ENCODE measurements at regions of chr21 and their contacts with region 1.

Region 1: GRCh38 chr21:42818328-42818749 is 61.0 kb downstream of the WDR4 start:
- DNase-seq: peak; percentile 77
- H3K4me3 Mint-ChIP-seq: no peak overlapping the region
- H3K27ac Mint-ChIP-seq: no peak overlapping the region
- H3K4me1 Mint-ChIP-seq: no peaks in the 10 kb centered on the region
- H3K27me3 Mint-ChIP-seq: no peaks in the 10 kb centered on the region

Region 2: DNA sequence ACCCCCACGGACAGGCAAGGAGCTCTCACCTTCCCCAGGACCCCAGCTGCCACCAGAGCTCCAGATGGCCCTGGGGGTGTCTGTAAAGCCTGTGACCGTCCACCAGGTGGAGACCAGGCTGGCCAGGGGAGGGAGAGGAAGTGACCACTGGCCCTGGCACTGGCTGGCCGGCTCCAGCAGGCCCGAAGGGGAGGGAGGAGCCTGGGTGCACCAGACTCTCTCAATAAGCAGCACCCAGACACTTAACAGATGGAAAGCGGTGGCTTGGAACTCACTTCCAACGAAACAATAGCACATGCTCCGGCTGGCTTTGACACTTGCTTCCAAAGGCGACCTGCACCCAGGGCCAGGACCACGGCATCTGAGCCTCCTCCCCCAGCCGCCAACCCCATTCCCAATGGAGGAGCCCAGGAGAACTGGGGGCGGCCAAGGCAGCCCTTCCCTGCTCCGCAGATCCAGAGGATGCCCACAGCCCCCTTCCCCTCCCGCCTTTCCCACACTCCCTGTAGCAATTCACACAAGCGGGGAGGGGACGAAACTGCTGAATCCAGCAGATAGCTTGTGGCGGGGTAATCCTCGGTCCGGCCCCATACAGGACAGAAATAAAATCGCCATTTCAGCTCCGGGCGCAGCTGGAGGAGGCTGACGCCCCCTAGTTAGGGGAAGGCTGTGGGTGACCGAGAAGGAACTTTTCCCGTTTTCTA is 165.7 kb before region 1 on chr21:
- CTCF ChIA-PET with region 1: no interaction called
- intact Hi-C with region 1: loop called (anchors 1 kb)
- DNase-seq: no peak
- H3K4me3 Mint-ChIP-seq: peak overlapping the region; percentile 70
- H3K27ac Mint-ChIP-seq: no peak overlapping the region
- H3K4me1 Mint-ChIP-seq: peaks cover 20% of the 10 kb centered on the region
- H3K27me3 Mint-ChIP-seq: no peaks in the 10 kb centered on the region

Region 3: DNA sequence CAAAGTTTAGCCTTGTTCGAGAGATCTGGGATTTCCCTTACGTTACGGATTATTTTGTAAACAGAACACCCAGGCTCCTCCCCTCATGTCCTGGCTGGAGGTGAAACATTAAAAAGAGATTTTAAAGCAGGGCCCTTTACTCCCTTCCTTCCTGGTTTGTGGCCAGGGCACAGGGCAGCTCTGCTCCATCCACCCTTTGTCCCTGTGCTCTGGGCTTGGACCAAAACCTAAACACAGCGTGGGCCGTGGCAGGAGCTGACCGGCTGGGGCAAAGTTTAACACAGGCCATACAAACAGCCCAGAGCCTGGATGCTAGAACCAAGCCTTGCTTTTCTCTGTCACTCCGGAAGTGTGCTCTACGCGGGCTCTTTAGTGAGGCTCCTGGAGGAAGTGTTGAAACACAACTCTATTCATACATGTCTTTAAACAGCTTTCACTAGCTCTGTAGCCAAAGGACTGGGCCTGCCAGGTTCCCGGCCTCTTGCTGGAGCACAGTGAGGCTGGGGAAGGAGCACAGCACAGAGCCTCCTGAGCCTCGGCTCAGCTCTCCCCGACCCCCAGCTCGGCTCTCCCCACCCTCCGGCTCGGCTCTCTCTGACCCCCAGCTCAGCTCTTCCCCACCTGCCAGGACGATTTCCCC is 80.3 kb before region 1 on chr21:
- CTCF ChIA-PET with region 1: no interaction called
- intact Hi-C with region 1: loop called (anchors 5 kb)
- DNase-seq: peak; percentile 32
- H3K4me3 Mint-ChIP-seq: peak overlapping the region; percentile 44
- H3K27ac Mint-ChIP-seq: peak overlapping the region; percentile 88
- H3K4me1 Mint-ChIP-seq: peaks cover 21% of the 10 kb centered on the region
- H3K27me3 Mint-ChIP-seq: no peaks in the 10 kb centered on the region

Region 4: GRCh38 chr21:43277481-43278351 is 459.4 kb after region 1 on chr21:
- CTCF ChIA-PET with region 1: no interaction called
- intact Hi-C with region 1: no loop called
- DNase-seq: no peak
- H3K4me3 Mint-ChIP-seq: no peak overlapping the region
- H3K27ac Mint-ChIP-seq: no peak overlapping the region
- H3K4me1 Mint-ChIP-seq: no peaks in the 10 kb centered on the region
- H3K27me3 Mint-ChIP-seq: peaks cover 5% of the 10 kb centered on the region

Measured in activated naive CD4-positive, alpha-beta T cell treated with anti-CD3 and anti-CD28 coated beads for 36 hours (primary cell).